Right ventricle myocardium superior (tissue), 1 donor: ENCODE measurements at regions of chr2 and their contacts with region 1.

Region 1: DNA sequence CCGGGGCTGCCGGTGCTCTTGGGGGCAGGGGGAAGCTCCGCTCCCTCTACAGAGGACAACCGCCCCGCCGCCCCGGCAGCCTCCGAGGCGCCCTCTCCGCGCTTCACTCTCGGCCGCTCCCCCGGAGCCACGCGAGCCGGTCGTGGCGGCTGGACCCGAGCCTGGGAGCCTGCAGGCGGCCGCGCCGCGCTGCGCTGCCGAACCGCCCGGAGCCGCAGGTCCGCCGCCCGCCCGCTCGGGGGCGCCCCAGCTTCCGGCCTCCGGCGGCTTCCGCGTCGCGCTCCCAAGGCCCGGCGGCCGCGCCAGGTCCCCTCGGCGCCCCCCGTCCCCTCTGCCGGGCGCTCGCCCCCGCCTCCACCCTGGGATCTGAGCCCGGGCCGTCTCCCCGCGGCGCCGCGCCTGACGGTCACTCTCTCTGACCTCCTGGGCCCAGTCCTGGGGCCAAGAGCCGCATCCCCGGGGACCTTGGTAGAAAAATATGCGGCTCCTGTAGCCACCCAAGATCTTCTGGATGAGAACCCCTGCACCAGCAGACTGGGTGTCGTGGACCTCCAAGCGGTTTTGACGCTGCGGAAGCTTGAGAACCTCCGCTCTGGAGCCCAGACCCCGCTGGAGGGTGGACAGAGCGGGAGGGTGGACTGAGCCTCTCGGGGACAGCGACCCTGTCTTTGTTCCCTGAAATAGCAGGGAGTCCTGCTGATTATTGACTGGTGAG is 44.3 kb downstream of the SERTAD2 start:
- DNase-seq: peak; percentile 84
- ATAC-seq: peak; percentile 87

Region 2: GRCh38 chr2:63514781-63515180 is 1094.6 kb before region 1 on chr2:
- intact Hi-C with region 1: no loop called
- DNase-seq: no peak
- ATAC-seq: no peak

Region 3: DNA sequence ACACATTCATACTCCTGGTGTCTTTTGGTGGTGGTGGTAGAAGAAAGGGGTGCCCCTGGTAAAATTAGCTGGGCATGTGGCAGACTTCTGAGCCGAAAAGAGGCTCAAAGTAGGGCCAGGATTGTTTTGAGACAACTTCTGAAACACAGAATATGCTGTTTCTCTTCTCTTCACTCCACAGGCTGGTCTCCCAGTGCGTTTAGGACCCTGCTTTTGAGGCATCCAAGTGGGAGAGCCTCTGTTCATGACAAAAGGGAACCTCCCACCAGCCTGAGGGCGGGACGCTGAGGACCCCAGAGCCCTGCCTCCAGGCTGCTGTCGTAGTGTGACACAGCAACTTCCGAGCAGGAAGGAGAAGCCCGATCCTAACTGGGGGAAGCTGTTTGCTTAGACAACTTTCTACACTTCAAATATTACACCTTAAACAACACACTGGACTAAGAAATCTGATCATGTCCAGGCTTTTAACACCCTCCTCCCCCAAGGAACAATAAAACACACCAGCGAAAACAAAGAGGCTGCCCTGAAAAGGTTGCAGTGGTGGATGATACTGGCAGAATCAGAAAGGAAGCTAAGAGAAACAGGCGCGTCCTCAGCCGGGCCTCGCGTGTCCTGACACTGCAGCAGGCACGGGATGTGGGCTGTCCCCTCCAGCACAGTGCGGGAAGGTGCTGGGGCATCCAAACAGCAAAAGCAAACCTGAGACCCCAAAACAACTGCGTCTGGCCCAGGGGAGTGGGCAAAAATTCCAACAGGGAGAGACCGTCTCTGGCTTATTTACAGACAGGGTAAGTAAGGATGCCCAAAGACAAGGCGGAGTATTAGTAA is 35.0 kb after region 1 on chr2:
- intact Hi-C with region 1: loop called (anchors 5 kb)
- DNase-seq: peak; percentile 89
- ATAC-seq: peak; percentile 89

Region 4: GRCh38 chr2:64745562-64745961 is 136.2 kb after region 1 on chr2:
- intact Hi-C with region 1: no loop called
- DNase-seq: no peak
- ATAC-seq: no peak

Region 5: GRCh38 chr2:65024149-65024829 is 414.9 kb after region 1 on chr2:
- intact Hi-C with region 1: no loop called
- DNase-seq: no peak
- ATAC-seq: no peak